ENCODE measurements at regions of chr18 and their contacts with region 1.

Region 1: GRCh38 chr18:41982942-41983660 is 28.1 kb downstream of the PIK3C3 start:
- DNase-seq: no peak
- ATAC-seq: peak; percentile 94
- H3K4me3 ChIP-seq: no peak overlapping the region
- H3K27ac ChIP-seq: peak overlapping the region; percentile 50; the same call in 1 of the 2 replicates
- H3K4me1 ChIP-seq: peaks cover 9% of the 10 kb centered on the region
- H3K27me3 ChIP-seq: no peaks in the 10 kb centered on the region
- CTCF ChIP-seq: no peak
- EP300 ChIP-seq: peak in 1 of 2 experiments; percentile 36; a peak in 1 of 4 replicates
- POLR2A ChIP-seq: no peak
- RAD21 ChIP-seq: no peak

Region 2: DNA sequence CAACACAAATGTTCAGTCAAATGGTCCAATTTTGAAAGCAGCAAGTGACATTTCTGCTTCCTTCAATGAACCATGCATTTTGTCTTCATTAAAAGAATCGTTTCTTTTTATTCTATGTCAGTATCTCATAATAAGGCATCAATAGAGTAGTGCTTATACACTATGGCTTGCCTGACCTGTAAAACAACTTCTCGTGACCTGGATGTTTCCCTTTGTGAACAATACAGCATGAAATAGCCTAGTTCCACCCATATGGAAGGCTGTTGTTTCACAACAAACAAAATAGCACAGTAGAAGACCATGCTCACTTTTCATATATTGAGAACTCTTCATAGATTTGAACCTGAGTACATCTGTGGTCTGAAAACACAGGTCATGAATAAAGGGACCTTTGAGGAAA is 132.3 kb before region 1 on chr18:
- CTCF ChIA-PET with region 1: no interaction called
- POLR2A ChIA-PET with region 1: no interaction called
- RAD21 ChIA-PET with region 1: no interaction called
- SMC1A ChIA-PET with region 1: no interaction called
- in situ Hi-C with region 1: no loop called
- intact Hi-C with region 1: no loop called
- DNase-seq: no peak
- ATAC-seq: no peak
- H3K4me3 ChIP-seq: no peak overlapping the region
- H3K27ac ChIP-seq: no peak overlapping the region
- H3K4me1 ChIP-seq: no peaks in the 10 kb centered on the region
- H3K27me3 ChIP-seq: 0 out of 4 replicates have a peak, but pooled peaks cover 0 to 5% of the 10 kb centered on the region in 2 experiments
- CTCF ChIP-seq: no peak
- EP300 ChIP-seq: no peak
- POLR2A ChIP-seq: no peak
- RAD21 ChIP-seq: no peak

Region 3: GRCh38 chr18:41954827-41955613 is 28.1 kb before region 1 on chr18 and contains the start of gene PIK3C3:
- CTCF ChIA-PET with region 1: interaction called, 3 read pairs
- POLR2A ChIA-PET with region 1: interaction called, 13 read pairs
- RAD21 ChIA-PET with region 1: interaction called, 3 read pairs
- SMC1A ChIA-PET with region 1: interaction called, 4 read pairs
- in situ Hi-C with region 1: no loop called
- intact Hi-C with region 1: no loop called
- DNase-seq: peak; percentile 92
- ATAC-seq: peak; percentile 93
- H3K4me3 ChIP-seq: peak within 1 kb of the TSS; percentile 94
- H3K27ac ChIP-seq: peak within 1 kb of the TSS; percentile 71
- H3K4me1 ChIP-seq: no peaks in the 10 kb centered on the region; the same call in 1 of the 2 replicates
- H3K27me3 ChIP-seq: no peaks in the 10 kb centered on the region
- CTCF ChIP-seq: no peak
- EP300 ChIP-seq: no peak
- POLR2A ChIP-seq: peak; percentile 74
- RAD21 ChIP-seq: no peak
- polyA plus RNA-seq, gene PIK3C3: 20.1 to 37.7 TPM

Region 4: DNA sequence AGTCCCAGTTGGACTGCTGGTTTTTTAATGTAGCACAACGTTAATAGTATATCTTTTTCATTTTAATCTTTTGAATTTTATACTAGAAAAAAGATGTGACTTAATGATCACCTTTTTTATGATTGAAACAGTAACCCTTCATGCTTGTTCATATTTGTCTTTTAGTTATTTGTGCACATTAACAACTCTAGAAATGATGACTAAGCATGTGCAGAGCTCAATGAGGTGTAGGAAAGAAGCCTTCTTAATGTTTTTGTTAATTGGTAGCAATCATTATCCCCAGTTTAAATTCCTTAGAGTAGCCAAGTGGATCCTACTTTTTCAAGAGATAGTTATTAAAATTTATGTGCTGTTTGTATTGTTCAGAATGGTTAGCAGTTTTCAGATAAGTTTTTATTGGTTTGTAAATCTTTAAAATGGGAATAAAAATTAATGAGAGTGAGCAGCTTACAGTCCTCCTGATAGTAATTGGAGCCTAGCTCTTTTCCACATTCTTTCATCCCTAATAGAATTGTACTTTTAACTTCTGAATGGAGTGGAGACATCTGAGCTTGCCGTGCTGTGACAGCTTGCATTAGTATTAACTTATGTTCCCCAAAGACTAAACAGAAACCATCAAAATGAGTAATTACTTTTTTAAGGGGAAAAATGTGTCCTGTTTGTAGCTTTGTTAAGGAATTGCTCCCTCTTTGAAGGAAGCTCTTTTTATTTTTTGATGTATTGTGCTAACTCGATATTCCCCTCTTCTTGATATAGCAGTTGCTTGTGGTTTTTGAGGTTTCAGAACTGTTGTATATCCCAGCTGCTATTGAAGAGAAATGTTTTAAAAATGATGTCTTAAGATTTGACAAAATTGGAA is 10.8 kb before region 1 on chr18:
- CTCF ChIA-PET with region 1: interaction called, 5 read pairs
- POLR2A ChIA-PET with region 1: interaction called, 7 read pairs
- RAD21 ChIA-PET with region 1: interaction called, 5 read pairs
- SMC1A ChIA-PET with region 1: interaction called, 15 read pairs
- in situ Hi-C with region 1: no loop called
- intact Hi-C with region 1: no loop called
- DNase-seq: no peak
- ATAC-seq: peak; percentile 48
- H3K4me3 ChIP-seq: no peak overlapping the region; the same call in 1 of the 2 replicates
- H3K27ac ChIP-seq: peak overlapping the region; percentile 24; the same call in 1 of the 2 replicates
- H3K4me1 ChIP-seq: peaks cover 10% of the 10 kb centered on the region
- H3K27me3 ChIP-seq: no peaks in the 10 kb centered on the region
- CTCF ChIP-seq: no peak
- EP300 ChIP-seq: no peak
- POLR2A ChIP-seq: no peak
- RAD21 ChIP-seq: no peak

Measured in GM12878 (cell line).